ENCODE measurements at regions of chr18 and their contacts with region 1.

Region 1: DNA sequence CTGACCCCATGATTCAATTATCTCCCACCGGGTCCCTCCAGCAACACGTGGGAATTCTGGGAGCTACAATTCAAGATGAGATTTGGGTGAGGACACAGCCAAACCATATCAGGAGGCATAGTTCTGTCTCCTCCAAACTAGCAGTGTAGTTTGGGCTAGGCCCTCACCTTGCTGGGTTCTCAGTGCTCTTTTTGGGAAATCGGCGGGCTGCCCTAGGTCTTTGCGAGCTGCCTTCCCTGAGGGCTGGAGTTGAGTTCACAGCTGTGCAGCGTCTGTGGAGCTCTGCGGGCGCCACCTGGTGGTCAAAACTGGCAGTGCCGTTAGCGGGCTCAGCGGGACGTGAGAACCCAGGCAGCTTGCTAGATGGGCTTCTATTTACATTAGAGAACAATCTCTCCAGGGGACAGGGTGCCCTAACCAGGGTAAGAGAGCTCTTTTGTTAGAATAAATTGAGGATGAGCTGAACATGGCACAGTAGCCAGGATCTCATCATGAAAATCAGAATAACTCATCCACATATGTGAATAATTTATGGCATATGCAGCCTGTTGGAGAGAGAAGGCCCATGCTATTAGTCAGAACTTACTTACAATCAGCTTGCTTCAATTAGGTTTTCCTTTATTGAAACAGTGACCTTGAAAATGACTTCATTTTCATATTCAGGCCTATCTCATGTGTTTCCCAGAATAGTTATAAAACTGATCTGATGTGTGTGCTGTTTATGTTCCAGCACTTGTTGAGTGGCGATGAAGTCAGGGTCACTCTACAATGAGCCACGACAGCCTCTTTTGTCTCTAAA is 27.4 kb upstream of the YES1 start:
- DNase-seq: peak; percentile 87 to 96 (median 95)
- ATAC-seq: peak; percentile 93 to 94
- H3K4me3 ChIP-seq: no peak overlapping the region
- H3K27ac ChIP-seq: no peak overlapping the region
- H3K4me1 ChIP-seq: no peaks in the 10 kb centered on the region
- H3K27me3 ChIP-seq: no peaks in the 10 kb centered on the region

Region 2: GRCh38 chr18:629269-630150 is 209.9 kb before region 1 on chr18:
- intact Hi-C with region 1: loop called in 2 of 4 experiments (anchors 5 kb)
- DNase-seq: no peak
- ATAC-seq: no peak
- H3K4me3 ChIP-seq: no peak overlapping the region
- H3K27ac ChIP-seq: no peak overlapping the region
- H3K4me1 ChIP-seq: no peaks in the 10 kb centered on the region
- H3K27me3 ChIP-seq: no peaks in the 10 kb centered on the region

Region 3: DNA sequence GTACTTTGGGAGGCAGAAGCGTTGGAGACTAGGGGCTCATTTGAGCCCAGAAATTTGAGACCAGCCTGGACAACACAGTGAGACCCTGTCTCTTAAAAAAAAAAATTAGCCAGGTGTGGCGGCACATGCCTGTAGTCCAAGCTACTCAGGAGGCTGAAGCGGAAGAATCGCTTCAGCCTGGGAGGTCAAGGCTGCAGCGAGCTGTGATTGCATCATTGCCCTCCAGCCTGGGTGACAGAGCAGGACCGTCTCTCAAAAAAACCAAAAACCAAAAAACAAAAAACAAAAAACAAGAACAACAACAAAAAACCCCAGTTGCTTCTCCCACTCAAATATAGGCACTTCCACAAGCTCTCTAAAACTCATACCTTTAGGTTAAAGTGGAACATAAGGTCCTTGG is 37.8 kb after region 1 on chr18:
- intact Hi-C with region 1: no loop called
- DNase-seq: no peak
- ATAC-seq: no peak
- H3K4me3 ChIP-seq: no peak overlapping the region
- H3K27ac ChIP-seq: no peak overlapping the region
- H3K4me1 ChIP-seq: no peaks in the 10 kb centered on the region
- H3K27me3 ChIP-seq: no peaks in the 10 kb centered on the region